Ascending aorta (tissue), 2 donors: ENCODE measurements at regions of chr3 and their contacts with region 1.

Region 1: DNA sequence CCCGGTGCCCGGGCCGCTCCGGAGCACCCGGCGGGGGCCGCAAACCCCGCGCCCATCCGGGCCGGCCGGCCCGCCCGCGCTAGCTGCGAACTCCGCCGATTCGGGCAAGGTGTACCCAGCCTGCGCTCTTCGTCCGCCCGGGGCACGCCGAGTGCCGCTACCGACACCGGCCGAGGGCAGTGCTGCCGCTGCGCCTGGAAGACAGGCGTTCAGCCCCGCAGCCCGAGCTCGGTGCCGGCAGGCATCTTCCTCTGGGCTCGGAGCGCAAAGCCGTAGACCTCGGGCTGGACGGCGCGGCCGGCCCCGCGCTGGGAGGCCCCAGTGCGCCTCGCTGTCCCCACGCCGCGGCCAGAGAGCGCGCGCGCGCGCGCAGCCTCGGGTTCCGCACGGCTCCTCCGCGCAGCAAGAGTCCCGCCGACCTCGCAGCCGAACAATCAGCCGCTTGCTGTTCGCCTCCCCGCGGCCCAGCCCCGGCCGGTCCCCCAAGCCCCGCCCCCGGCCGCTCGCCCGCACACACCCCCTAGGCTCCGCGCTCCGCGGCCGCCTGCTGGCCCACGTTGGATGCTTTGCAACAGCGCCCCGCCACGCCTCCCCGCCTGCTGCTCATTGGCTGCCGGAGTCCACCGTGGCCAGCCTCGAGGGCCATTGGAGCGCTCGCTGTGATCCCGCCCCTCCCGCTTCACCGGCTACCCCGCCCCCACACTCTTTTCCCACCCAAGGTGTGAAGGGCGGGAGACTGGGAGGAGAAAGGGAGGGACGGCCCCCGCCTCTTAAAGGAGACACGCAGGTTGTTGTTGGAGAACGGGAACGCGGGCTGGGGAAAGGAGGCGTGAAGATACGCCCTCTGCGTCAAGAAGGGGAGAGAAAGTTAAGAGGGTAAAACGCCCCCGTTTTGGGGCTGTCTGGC is at the start of gene LRIG1:
- DNase-seq: peak; percentile 96 to 99
- H3K4me3 ChIP-seq: peak within 1 kb of the TSS; percentile 85 to 98
- H3K27ac ChIP-seq: peak within 1 kb of the TSS; percentile 90 to 92
- H3K4me1 ChIP-seq: peaks cover 0 to 23% of the 10 kb centered on the region in 2 donors
- H3K27me3 ChIP-seq: no peaks in the 10 kb centered on the region
- CTCF ChIP-seq: peak in 2 of 3 experiments; percentile 38 to 47
- total RNA-seq, gene LRIG1: 62.3 TPM

Region 2: GRCh38 chr3:66276705-66277274 is 224.0 kb before region 1 on chr3:
- intact Hi-C with region 1: loop called (anchors 10 kb)
- DNase-seq: peak in 1 of 2 donors; percentile 81
- H3K4me3 ChIP-seq: no peak overlapping the region
- H3K27ac ChIP-seq: no peak overlapping the region
- H3K4me1 ChIP-seq: no peaks in the 10 kb centered on the region
- H3K27me3 ChIP-seq: no peaks in the 10 kb centered on the region
- CTCF ChIP-seq: peak; percentile 55 to 67 (median 56)

Region 3: DNA sequence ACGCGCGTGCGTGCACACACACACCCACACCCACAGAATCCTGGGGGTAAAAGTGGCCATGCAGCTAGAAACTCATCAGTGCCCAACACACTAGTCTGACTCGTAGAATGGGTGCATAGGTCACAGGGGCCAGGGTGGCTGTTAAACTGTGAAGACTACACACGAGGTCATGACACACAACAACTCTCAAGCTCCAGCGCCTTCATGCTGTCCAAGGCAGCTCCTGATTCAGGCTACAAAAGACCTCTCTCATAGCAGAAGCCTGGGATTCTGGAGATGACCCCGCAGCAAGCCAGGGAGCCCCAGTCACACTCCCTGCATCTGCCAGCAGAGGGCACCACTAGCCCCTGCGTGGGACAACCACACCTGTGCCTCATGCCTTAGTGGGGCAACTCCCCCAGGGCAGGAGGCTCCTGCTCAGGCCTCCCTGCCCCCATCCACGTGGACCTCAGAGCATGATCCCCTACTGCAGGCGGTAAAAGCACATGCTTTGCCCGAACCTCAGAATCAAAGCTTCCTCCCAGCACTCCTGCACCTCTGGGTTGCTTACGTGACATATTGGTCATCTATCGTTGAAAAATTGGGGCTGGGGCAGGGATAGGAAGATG is 93.1 kb before region 1 on chr3:
- intact Hi-C with region 1: loop called (anchors 2 kb)
- DNase-seq: peak in 1 of 2 donors; percentile 82
- H3K4me3 ChIP-seq: no peak overlapping the region
- H3K27ac ChIP-seq: peak overlapping the region; percentile 80 to 93
- H3K4me1 ChIP-seq: peaks cover 19 to 55% of the 10 kb centered on the region in 2 donors
- H3K27me3 ChIP-seq: no peaks in the 10 kb centered on the region
- CTCF ChIP-seq: peak; percentile 80 to 91 (median 87)

Region 4: DNA sequence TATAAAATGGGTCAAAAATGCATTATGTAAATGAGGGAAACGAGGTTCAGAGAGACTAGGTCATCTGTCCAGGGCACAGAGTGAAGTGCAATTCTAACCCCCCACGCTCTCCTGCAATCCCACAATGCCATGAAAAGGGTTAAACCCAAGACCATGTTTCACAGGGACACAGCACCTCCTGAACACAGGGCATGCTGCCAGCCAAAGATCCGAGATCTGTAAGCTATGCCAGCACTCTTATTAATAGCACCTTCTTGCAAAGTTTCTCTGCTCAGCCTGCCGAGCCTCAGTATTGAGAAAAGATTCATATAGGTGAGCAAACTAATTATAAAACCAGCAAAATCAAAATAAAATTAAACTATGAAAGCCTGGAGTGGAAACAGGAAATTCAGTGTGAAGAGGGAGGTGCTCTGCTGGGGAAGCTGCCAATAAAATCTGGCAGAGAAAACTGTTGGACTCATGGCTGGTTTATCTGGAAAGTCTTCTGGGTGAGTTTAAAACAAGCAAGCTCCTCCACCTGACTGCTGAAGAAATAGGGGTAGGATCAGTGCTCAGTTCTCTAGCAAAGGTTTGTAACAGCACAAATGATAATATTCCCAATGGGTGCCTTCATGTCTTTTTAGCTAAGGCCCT is 50.3 kb before region 1 on chr3:
- intact Hi-C with region 1: loop called (anchors 1 kb)
- DNase-seq: peak in 1 of 2 donors; percentile 80
- H3K4me3 ChIP-seq: peak overlapping the region in 1 of 2 donors; percentile 23
- H3K27ac ChIP-seq: peak overlapping the region; percentile 79 to 84
- H3K4me1 ChIP-seq: peaks cover 39 to 67% of the 10 kb centered on the region in 2 donors
- H3K27me3 ChIP-seq: no peaks in the 10 kb centered on the region
- CTCF ChIP-seq: no peak

Region 5: DNA sequence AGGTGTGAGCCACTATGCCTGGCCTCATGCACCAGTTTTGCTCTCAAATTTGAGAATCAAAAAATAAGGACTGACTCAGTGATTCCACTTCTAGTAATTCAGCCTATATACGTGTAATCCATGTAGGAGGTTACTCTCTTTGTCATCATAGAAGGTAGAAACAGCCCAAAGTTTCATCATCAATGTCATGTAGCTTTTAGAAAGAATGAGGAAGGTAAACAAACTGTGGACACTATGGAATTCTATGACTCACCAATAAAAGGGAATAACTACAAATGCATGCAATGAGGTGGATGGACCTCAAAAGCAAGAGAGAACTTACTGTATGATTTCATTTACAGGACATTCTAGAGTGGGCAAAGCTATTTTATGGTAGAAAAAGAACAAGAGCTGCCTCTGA is 93.1 kb after region 1 on chr3:
- intact Hi-C with region 1: loop called (anchors 10 kb)
- DNase-seq: no peak
- H3K4me3 ChIP-seq: no peak overlapping the region
- H3K27ac ChIP-seq: no peak overlapping the region
- H3K4me1 ChIP-seq: peaks cover 0 to 2% of the 10 kb centered on the region in 2 donors
- H3K27me3 ChIP-seq: no peaks in the 10 kb centered on the region
- CTCF ChIP-seq: no peak

Region 6: DNA sequence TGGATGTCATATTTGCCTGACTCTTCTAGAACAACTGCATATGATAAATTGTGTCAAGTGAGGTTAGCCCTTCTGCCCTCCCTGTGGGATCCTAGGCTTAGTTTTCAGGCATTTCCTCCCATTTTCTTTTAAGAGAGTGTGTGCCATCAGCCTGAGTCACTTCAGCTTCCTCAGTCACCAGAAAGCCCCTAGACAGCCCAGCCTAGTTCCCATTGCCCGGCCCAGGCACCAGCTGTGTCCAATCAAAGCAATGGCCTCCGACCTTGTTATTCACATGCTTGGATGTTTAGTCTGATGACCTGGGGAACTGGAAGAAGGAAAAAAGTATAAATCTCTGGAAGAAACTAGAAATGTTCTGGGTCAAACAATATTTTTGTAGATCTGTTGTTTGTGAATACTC is 221.8 kb after region 1 on chr3:
- intact Hi-C with region 1: loop called (anchors 10 kb)
- DNase-seq: peak; percentile 9 to 80
- H3K4me3 ChIP-seq: no peak overlapping the region
- H3K27ac ChIP-seq: peak overlapping the region; percentile 25 to 52
- H3K4me1 ChIP-seq: no peaks in the 10 kb centered on the region
- H3K27me3 ChIP-seq: no peaks in the 10 kb centered on the region
- CTCF ChIP-seq: no peak

Region 7: DNA sequence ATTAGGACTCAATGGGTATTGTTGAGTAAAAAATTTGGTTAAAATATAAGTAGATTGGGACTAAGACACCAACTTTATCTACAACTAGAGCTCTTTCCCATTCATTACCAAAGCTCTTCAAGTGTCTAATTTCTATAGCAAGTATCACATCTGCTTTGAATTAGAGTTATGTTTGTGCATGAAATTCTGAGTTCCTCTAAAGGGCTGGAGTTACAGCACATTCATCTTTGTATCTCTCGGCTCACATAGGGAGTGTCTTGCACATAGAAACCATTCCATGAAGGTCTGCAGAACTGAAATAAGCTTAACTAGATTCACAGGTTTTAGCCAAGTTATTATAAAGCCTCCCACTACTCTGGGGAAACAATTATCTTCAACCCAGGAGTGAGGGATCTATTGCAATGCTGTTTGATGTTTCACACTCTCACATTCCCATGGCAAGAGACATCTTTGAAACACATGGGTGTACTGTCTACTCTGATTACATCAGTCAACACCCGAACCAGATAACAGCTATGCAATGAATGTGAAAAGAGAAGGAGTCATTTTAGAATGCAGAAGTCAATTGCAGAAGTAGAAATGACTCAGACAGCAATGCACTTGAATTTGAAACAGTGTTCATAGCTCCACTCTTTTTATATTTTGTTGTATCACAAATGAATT is 404.1 kb after region 1 on chr3:
- intact Hi-C with region 1: no loop called
- DNase-seq: no peak
- H3K4me3 ChIP-seq: no peak overlapping the region
- H3K27ac ChIP-seq: no peak overlapping the region
- H3K4me1 ChIP-seq: no peaks in the 10 kb centered on the region
- H3K27me3 ChIP-seq: no peaks in the 10 kb centered on the region
- CTCF ChIP-seq: no peak